ENCODE measurements at regions of chr11 and their contacts with region 1.

Region 1: DNA sequence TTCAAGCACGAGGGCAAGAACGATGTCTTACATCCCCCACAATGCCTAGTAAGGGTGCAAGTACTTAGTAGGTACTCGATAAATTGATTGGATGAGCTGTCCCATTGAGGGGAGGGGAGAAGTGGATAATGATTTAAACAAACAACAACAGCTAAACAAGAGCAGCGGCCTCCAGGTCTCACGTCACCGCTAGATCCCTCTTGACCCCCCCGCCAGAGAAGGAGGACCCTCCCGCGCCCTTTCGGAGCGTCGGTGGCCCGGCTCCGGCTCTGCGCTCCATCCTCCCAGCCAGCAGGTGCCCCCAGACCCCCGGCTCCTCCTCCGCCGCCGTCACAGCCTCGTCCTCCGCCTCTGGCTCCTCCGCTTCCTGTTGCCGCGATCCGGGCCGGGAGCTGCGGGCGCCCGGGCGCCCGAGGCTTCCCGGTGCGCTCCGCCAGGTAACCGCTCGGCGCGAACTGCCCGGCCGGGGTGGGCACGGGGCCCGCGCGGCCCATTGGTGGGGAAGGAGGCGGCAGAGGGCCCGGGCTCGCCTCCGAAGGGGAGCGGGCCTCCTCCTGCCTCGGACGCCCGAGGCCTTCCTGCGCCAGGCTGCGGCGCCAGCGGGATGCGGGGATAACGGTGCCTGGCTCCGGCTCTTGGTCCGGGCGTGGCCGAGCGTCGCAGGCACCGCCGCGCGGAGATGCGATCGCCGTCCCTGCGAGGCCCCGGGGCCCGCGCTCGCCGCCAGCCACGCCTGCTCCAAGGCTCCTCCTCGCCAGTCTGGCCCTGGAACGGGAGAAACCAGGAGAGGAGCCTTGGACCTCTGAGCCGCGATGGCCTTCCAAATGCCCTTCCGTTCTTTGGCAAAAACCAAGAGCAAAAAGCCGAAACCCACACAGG is at the start of gene TLCD5:
- DNase-seq: peak in 2 of 3 donors; percentile 66 to 70
- ATAC-seq: peak; percentile 77 to 81 (median 80)
- H3K4me3 ChIP-seq: peak within 1 kb of the TSS; percentile 47 to 59 (median 59)
- H3K27ac ChIP-seq: peak within 1 kb of the TSS; percentile 56 to 87 (median 62)
- H3K4me1 ChIP-seq: no peaks in the 10 kb centered on the region
- H3K27me3 ChIP-seq: no peaks in the 10 kb centered on the region
- CTCF ChIP-seq: no peak
- POLR2A ChIP-seq: peak; percentile 54
- total RNA-seq, gene TLCD5: 0.07 to 1.3 (median 0.38) TPM

Region 2: GRCh38 chr11:120952461-120953434 is 627.6 kb after region 1 on chr11:
- intact Hi-C with region 1: loop called in 1 of 2 experiments (anchors 10 kb)
- DNase-seq: peak; percentile 73 to 81 (median 77)
- ATAC-seq: peak; percentile 93 to 95 (median 94)
- H3K4me3 ChIP-seq: no peak overlapping the region
- H3K27ac ChIP-seq: no peak overlapping the region
- H3K4me1 ChIP-seq: peaks cover 0 to 7% (median 0%) of the 10 kb centered on the region in 4 donors
- H3K27me3 ChIP-seq: no peaks in the 10 kb centered on the region
- CTCF ChIP-seq: peak; percentile 65 to 71 (median 67)
- POLR2A ChIP-seq: no peak